ENCODE measurements at regions of chr16 and their contacts with region 1.

Region 1: GRCh38 chr16:50747207-50747956 is 5.5 kb downstream of the CYLD start:
- DNase-seq: peak; percentile 40
- H3K4me3 Mint-ChIP-seq: peak overlapping the region; percentile 85
- H3K27ac Mint-ChIP-seq: peak overlapping the region; percentile 92
- H3K4me1 Mint-ChIP-seq: peaks cover 74% of the 10 kb centered on the region
- H3K27me3 Mint-ChIP-seq: no peaks in the 10 kb centered on the region

Region 2: DNA sequence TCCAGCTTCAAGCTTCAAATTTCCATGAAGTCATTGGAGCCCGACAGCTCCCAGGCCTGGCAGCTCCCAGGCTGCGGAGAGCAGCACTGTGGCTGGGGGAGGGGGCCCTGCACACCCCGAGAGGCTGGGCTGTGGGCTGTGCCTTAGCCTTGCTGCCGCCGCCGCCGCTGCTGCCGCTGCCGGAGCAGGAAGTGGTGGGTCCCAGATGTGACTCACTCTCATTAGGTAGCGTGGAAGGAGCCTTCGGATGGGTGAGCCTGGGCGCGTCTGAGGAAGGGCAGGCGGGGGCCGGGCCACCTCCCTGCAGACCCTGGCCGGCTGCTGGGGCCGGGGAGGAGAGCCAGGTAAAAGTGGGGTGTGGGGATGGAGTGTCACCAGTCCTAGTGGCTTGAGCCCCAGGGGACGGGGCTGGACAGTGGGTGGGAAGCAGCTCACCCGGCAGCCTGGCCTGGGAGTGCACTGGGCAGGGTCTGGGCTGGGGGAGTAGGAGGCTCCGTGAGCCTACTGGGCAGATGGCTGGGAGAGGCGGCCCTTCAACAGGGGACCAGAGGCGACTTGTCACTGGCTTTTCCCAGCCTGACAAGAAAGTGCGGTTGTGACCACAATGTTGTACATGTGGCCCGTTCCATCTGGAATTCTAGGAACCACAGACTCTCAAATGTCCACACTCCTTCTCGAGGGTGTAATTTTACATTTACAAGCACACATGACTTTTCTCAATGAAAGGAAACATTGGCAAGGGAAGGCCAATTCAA is 480.9 kb before region 1 on chr16 and contains the start of gene ADCY7:
- intact Hi-C with region 1: loop called (anchors 1 kb)
- DNase-seq: peak; percentile 79
- H3K4me3 Mint-ChIP-seq: peak within 1 kb of the TSS; percentile 86
- H3K27ac Mint-ChIP-seq: peak within 1 kb of the TSS; percentile 96
- H3K4me1 Mint-ChIP-seq: peaks cover 86% of the 10 kb centered on the region
- H3K27me3 Mint-ChIP-seq: no peaks in the 10 kb centered on the region
- total RNA-seq, gene ADCY7: 78.0 and 81.9 TPM in 2 replicates

Region 3: GRCh38 chr16:50548125-50548908 is 199.1 kb before region 1 on chr16 and contains the start of gene NKD1:
- intact Hi-C with region 1: loop called (anchors 1 kb)
- DNase-seq: peak; percentile 65
- H3K4me3 Mint-ChIP-seq: peak within 1 kb of the TSS; percentile 91
- H3K27ac Mint-ChIP-seq: peak within 1 kb of the TSS; percentile 59
- H3K4me1 Mint-ChIP-seq: peaks cover 14% of the 10 kb centered on the region
- H3K27me3 Mint-ChIP-seq: peaks cover 37% of the 10 kb centered on the region
- total RNA-seq, gene NKD1: 1.1 and 1.4 TPM in 2 replicates

Region 4: GRCh38 chr16:50681021-50681885 is 66.1 kb before region 1 on chr16 and contains the start of gene SNX20:
- intact Hi-C with region 1: loop called (anchors 1 kb)
- DNase-seq: peak; percentile 41
- H3K4me3 Mint-ChIP-seq: peak within 1 kb of the TSS; percentile 82
- H3K27ac Mint-ChIP-seq: peak within 1 kb of the TSS; percentile 85
- H3K4me1 Mint-ChIP-seq: peaks cover 90% of the 10 kb centered on the region
- H3K27me3 Mint-ChIP-seq: no peaks in the 10 kb centered on the region
- total RNA-seq, gene SNX20: 34.3 TPM in 2 replicates

Region 5: DNA sequence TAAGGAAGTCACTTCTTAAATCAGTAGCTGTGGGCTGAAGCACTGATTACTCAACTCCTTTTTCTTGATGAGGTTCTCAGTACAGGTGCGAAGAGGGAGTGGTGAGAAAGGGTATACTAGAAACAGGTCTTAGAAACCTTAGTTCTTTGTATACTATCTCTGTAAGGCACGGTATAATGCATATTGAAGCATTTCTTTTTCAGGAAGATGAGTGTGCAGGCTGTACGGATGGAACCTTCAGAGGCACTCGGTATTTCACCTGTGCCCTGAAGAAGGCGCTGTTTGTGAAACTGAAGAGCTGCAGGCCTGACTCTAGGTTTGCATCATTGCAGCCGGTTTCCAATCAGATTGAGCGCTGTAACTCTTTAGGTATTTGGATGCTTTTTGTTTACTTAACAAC is 33.7 kb after region 1 on chr16:
- intact Hi-C with region 1: loop called (anchors 2 kb)
- DNase-seq: no peak
- H3K4me3 Mint-ChIP-seq: no peak overlapping the region
- H3K27ac Mint-ChIP-seq: peak overlapping the region; percentile 62
- H3K4me1 Mint-ChIP-seq: peaks cover 44% of the 10 kb centered on the region
- H3K27me3 Mint-ChIP-seq: no peaks in the 10 kb centered on the region